B cell (primary cell): ENCODE measurements at regions of chr2 and their contacts with region 1.

Region 1: DNA sequence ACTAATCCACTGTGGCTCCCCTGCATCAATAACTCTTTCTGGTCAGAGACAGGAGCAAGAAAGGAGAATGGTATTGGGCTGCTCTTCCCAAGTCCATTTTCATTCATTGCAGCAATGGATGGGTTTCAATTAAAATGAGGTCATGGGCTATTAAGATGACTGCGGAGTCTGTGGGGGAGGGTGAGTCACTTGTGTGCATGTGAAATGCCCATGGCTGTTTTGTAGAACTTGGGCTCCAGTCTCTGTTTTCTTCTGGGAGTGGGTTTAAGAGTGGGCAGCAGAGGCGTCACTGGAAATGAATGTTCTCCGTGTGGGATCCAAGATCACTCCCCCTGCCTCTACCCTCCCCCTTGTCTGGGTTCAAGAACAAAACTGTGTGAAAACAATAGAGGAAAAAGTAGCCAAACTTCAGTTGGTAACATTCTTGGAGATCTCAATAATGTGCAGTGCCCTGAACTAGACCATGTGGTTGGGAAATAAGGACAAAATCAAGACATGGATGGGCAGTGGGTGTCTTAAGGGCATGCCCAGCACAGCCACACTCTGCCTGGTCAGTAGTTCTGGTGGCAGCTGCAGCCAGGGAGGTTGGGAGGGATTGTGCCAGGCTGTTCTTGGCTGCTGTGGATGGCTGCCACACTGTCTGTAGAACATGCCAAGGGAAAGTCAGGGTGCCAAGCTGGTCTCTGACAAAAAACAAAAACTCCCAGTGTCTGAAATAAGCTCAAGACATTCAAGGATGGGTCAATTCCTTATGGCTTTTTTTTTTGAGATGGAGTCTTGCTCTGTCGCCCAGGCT is 68.2 kb upstream of the CXCR4 start:
- DNase-seq: no peak
- ATAC-seq: no peak
- H3K4me3 ChIP-seq: no peak overlapping the region
- H3K4me3 Mint-ChIP-seq: no peak overlapping the region
- H3K27ac ChIP-seq: no peak overlapping the region
- H3K27ac Mint-ChIP-seq: no peak overlapping the region
- H3K4me1 ChIP-seq: peaks cover 0 to 13% of the 10 kb centered on the region in 2 donors
- H3K4me1 Mint-ChIP-seq: peaks cover 28% of the 10 kb centered on the region
- H3K27me3 ChIP-seq: no peaks in the 10 kb centered on the region
- H3K27me3 Mint-ChIP-seq: no peaks in the 10 kb centered on the region
- CTCF ChIP-seq: no peak

Region 2: GRCh38 chr2:135985018-135985825 is 201.0 kb before region 1 on chr2 and contains the start of gene DARS1:
- CTCF ChIA-PET with region 1: no interaction called
- POLR2A ChIA-PET with region 1: no interaction called
- intact Hi-C with region 1: no loop called
- DNase-seq: peak; percentile 91
- ATAC-seq: peak; percentile 84
- H3K4me3 ChIP-seq: peak within 1 kb of the TSS; percentile 75 to 99 (median 93)
- H3K4me3 Mint-ChIP-seq: peak within 1 kb of the TSS; percentile 97
- H3K27ac ChIP-seq: peak within 1 kb of the TSS; percentile 94 to 97
- H3K27ac Mint-ChIP-seq: peak within 1 kb of the TSS; percentile 98
- H3K4me1 ChIP-seq: peaks cover 29 to 31% of the 10 kb centered on the region in 2 donors
- H3K4me1 Mint-ChIP-seq: peaks cover 50% of the 10 kb centered on the region
- H3K27me3 ChIP-seq: no peaks in the 10 kb centered on the region
- H3K27me3 Mint-ChIP-seq: no peaks in the 10 kb centered on the region
- CTCF ChIP-seq: no peak
- total RNA-seq, gene DARS1: 88.3 and 92.0 TPM in 2 replicates

Region 3: GRCh38 chr2:136086253-136087016 is 99.7 kb before region 1 on chr2:
- CTCF ChIA-PET with region 1: no interaction called
- POLR2A ChIA-PET with region 1: interaction called, 10 read pairs
- intact Hi-C with region 1: no loop called
- DNase-seq: no peak
- ATAC-seq: no peak
- H3K4me3 ChIP-seq: no peak overlapping the region
- H3K4me3 Mint-ChIP-seq: no peak overlapping the region
- H3K27ac ChIP-seq: no peak overlapping the region
- H3K27ac Mint-ChIP-seq: no peak overlapping the region
- H3K4me1 ChIP-seq: peaks cover 5 to 7% of the 10 kb centered on the region in 2 donors
- H3K4me1 Mint-ChIP-seq: peaks cover 13% of the 10 kb centered on the region
- H3K27me3 ChIP-seq: no peaks in the 10 kb centered on the region
- H3K27me3 Mint-ChIP-seq: no peaks in the 10 kb centered on the region
- CTCF ChIP-seq: no peak

Region 4: GRCh38 chr2:136154402-136154783 is 31.8 kb before region 1 on chr2:
- CTCF ChIA-PET with region 1: no interaction called
- POLR2A ChIA-PET with region 1: interaction called, 3 read pairs
- intact Hi-C with region 1: loop called (anchors 5 kb)
- DNase-seq: no peak
- ATAC-seq: no peak
- H3K4me3 ChIP-seq: no peak overlapping the region
- H3K4me3 Mint-ChIP-seq: no peak overlapping the region
- H3K27ac ChIP-seq: no peak overlapping the region
- H3K27ac Mint-ChIP-seq: no peak overlapping the region
- H3K4me1 ChIP-seq: peaks cover 14 to 19% of the 10 kb centered on the region in 2 donors
- H3K4me1 Mint-ChIP-seq: peaks cover 23% of the 10 kb centered on the region
- H3K27me3 ChIP-seq: no peaks in the 10 kb centered on the region
- H3K27me3 Mint-ChIP-seq: no peaks in the 10 kb centered on the region
- CTCF ChIP-seq: no peak

Region 5: GRCh38 chr2:136517716-136518115 is 331.5 kb after region 1 on chr2:
- CTCF ChIA-PET with region 1: no interaction called
- POLR2A ChIA-PET with region 1: no interaction called
- intact Hi-C with region 1: no loop called
- DNase-seq: no peak
- ATAC-seq: no peak
- H3K4me3 ChIP-seq: no peak overlapping the region
- H3K4me3 Mint-ChIP-seq: no peak overlapping the region
- H3K27ac ChIP-seq: no peak overlapping the region
- H3K27ac Mint-ChIP-seq: no peak overlapping the region
- H3K4me1 ChIP-seq: no peaks in the 10 kb centered on the region
- H3K4me1 Mint-ChIP-seq: no peaks in the 10 kb centered on the region
- H3K27me3 ChIP-seq: peaks cover 0 to 15% (median 2%) of the 10 kb centered on the region in 4 experiments
- H3K27me3 Mint-ChIP-seq: peaks cover 33% of the 10 kb centered on the region
- CTCF ChIP-seq: no peak